AG04450 (cell line): ENCODE measurements at regions of chr2 and their contacts with region 1.

Region 1: DNA sequence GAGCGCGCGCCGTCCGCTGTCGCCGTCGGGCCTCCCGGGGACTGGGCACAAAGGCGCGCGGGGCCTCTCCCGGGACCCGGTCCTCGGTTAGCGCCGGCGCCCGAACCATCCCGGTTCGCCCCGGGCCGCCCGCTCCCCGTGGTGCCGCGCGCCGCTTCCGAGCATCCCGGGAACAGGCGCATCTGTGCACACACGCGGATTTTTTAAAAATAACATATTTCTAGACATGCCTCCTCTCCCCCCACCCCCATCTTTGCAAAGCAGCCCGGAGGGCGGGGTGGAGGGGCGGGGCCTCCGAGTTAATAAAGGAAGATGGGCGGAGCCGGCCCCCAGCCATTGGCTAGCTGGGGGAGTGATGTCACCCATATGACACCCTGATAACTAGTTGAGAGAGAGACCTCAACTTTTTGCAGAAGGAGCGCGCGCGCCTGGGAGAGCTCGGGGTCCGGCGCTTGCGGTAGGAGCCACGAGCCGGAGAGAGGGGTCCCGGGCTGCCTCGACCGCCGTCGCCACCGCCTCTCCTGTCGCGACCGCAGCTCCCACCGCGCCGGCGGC is at the start of gene SOX11:
- DNase-seq: peak; percentile 86
- H3K4me3 ChIP-seq: peak within 1 kb of the TSS; percentile 78
- H3K27ac ChIP-seq: peak within 1 kb of the TSS; percentile 39
- H3K27me3 ChIP-seq: no peaks in the 10 kb centered on the region
- CTCF ChIP-seq: no peak
- polyA plus RNA-seq, gene SOX11: 2.3 and 2.8 TPM in 2 replicates

Region 2: DNA sequence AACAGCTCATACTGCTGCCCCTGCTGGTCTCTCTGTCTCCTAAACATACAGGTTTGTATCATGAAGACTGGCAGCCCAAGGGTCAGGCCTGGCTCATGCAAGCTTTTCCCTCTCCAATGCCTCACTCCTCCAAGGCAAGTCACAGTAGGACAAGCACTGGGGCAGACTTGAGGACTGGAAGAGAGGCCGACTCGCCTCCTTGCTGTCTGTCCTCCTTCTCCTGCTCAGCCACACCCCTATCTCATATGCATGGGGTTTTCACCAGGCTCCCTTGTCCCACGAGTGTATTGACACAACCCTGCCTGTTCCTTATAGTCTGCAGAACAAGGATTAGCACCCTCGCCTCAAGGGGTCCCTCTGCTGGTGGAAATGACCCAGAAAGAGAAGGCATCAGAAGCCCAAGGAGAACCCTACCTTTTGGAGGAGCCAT is 223.8 kb after region 1 on chr2:
- CTCF ChIA-PET with region 1: interaction called, 14 read pairs
- POLR2A ChIA-PET with region 1: interaction called, 11 read pairs
- DNase-seq: peak; percentile 16
- H3K4me3 ChIP-seq: no peak overlapping the region
- H3K27ac ChIP-seq: no peak overlapping the region
- H3K27me3 ChIP-seq: no peaks in the 10 kb centered on the region
- CTCF ChIP-seq: peak; percentile 73

Region 3: GRCh38 chr2:6139916-6140315 is 447.9 kb after region 1 on chr2:
- CTCF ChIA-PET with region 1: no interaction called
- POLR2A ChIA-PET with region 1: no interaction called
- DNase-seq: no peak
- H3K4me3 ChIP-seq: no peak overlapping the region
- H3K27ac ChIP-seq: no peak overlapping the region
- H3K27me3 ChIP-seq: no peaks in the 10 kb centered on the region
- CTCF ChIP-seq: no peak